ENCODE measurements at regions of chr12 and their contacts with region 1.

Region 1: GRCh38 chr12:12736759-12737676 is 19.9 kb downstream of the CDKN1B start:
- DNase-seq: peak; percentile 72
- ATAC-seq: peak; percentile 87
- H3K4me3 ChIP-seq: peak overlapping the region in 3 of 5 experiments; percentile 7 to 49 (median 44)
- H3K4me3 Mint-ChIP-seq: peak overlapping the region; percentile 66
- H3K27ac ChIP-seq: peak overlapping the region; percentile 32 to 64
- H3K27ac Mint-ChIP-seq: peak overlapping the region; percentile 85
- H3K4me1 ChIP-seq: peaks cover 6 to 14% of the 10 kb centered on the region in 2 donors
- H3K4me1 Mint-ChIP-seq: peaks cover 14% of the 10 kb centered on the region
- H3K27me3 ChIP-seq: no peaks in the 10 kb centered on the region
- H3K27me3 Mint-ChIP-seq: no peaks in the 10 kb centered on the region
- CTCF ChIP-seq: peak; percentile 81

Region 2: DNA sequence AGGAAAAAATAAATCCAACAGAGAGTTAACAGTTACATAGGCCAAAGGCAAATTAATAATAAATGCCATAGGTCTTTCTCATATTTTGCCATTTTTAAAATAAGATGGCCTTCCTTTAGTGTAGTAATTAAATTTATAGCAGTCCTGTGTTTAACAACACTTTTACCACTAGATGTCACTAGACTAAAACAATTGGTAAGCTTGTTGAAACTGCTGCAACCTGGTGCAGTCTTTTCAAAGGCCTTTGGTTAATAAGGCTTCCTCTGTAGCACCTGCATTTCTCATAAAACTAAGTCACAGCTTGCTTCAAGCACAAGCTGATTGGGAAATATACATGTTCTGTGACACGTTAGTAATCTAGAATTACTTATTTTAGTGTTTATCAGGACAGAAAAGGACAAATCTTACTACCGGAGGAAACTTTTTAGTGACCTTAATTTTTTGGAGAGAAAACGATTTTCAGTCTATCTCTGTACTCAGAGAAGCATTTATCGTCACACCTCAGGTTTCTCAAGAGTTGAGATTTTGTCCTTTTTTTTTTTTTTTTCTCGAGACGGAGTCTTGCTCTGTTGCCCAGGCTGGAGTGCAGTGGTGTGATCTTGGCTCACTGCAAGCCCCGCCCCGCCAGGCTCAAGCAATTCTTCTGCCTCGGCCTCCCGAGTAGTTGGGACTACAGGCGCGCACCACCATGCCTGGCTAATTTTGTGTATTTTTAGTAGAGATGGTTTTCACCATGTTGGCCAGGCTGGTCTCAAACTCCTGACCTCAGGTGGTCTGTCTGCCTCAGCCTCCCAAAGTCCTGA is 360.2 kb before region 1 on chr12:
- CTCF ChIA-PET with region 1: interaction called, 168 read pairs
- POLR2A ChIA-PET with region 1: interaction called, 7 read pairs
- intact Hi-C with region 1: loop called (anchors 1 kb)
- DNase-seq: peak; percentile 78
- ATAC-seq: peak; percentile 64
- H3K4me3 ChIP-seq: no peak overlapping the region
- H3K4me3 Mint-ChIP-seq: no peak overlapping the region
- H3K27ac ChIP-seq: no peak overlapping the region
- H3K27ac Mint-ChIP-seq: no peak overlapping the region
- H3K4me1 ChIP-seq: peaks cover 10 to 12% of the 10 kb centered on the region in 2 donors
- H3K4me1 Mint-ChIP-seq: peaks cover 21% of the 10 kb centered on the region
- H3K27me3 ChIP-seq: no peaks in the 10 kb centered on the region
- H3K27me3 Mint-ChIP-seq: no peaks in the 10 kb centered on the region
- CTCF ChIP-seq: peak; percentile 79

Region 3: DNA sequence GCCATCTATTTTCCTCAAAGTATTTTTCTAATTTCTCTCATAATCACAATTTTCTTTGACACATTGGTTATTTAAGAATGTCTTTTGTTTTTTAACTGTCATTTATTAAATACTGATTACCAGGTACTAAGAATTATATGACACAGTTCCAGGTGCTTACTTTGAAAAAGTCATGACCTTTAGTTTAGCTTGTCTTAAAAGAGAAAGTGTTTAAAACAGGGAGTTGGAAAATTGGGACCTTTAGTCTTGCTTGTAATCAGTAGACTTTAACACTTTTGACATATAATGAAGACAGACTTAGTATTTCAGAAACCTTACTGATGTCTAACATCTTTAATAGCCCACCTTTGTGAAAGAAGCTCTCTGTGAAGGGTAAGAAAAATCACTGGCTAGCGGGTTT is 106.2 kb before region 1 on chr12:
- CTCF ChIA-PET with region 1: interaction called, 15 read pairs
- POLR2A ChIA-PET with region 1: no interaction called
- intact Hi-C with region 1: no loop called
- DNase-seq: no peak
- ATAC-seq: no peak
- H3K4me3 ChIP-seq: no peak overlapping the region
- H3K4me3 Mint-ChIP-seq: no peak overlapping the region
- H3K27ac ChIP-seq: no peak overlapping the region
- H3K27ac Mint-ChIP-seq: no peak overlapping the region
- H3K4me1 ChIP-seq: no peaks in the 10 kb centered on the region
- H3K4me1 Mint-ChIP-seq: peaks cover 8% of the 10 kb centered on the region
- H3K27me3 ChIP-seq: no peaks in the 10 kb centered on the region
- H3K27me3 Mint-ChIP-seq: no peaks in the 10 kb centered on the region
- CTCF ChIP-seq: no peak

Region 4: DNA sequence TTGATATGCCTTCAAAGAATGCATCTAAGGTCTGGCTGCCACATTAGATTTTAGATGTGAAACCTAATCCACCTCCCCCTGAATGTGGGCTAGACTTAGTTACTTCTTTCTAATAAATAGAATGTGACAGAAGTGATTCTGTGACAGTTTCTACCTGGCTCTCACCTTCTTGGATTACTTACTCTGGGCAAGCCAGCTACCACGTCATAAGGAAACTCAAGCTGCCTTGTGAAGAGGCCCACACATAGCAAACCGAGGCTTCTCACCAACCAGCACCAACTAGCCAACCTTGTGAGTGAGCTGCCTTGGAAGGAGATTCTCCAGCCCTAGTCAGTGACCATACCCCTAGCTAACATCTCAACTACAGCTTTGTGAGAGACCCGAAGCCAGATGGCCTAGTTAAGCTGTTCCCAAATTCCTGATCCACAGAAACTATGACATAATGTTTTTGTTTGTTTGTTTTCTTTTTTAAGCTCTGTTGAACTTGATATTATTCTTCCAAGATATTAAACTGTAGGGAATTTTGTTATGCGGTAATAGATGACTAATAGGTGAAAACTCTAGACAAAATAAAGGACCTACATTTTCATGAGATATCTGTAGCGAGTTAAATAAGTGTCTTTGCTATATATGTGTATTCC is 47.3 kb before region 1 on chr12:
- CTCF ChIA-PET with region 1: interaction called, 34 read pairs
- POLR2A ChIA-PET with region 1: interaction called, 6 read pairs
- intact Hi-C with region 1: no loop called
- DNase-seq: no peak
- ATAC-seq: no peak
- H3K4me3 ChIP-seq: no peak overlapping the region
- H3K4me3 Mint-ChIP-seq: no peak overlapping the region
- H3K27ac ChIP-seq: no peak overlapping the region
- H3K27ac Mint-ChIP-seq: no peak overlapping the region
- H3K4me1 ChIP-seq: peaks cover 5 to 13% of the 10 kb centered on the region in 2 donors
- H3K4me1 Mint-ChIP-seq: peaks cover 13% of the 10 kb centered on the region
- H3K27me3 ChIP-seq: no peaks in the 10 kb centered on the region
- H3K27me3 Mint-ChIP-seq: no peaks in the 10 kb centered on the region
- CTCF ChIP-seq: no peak

Region 5: DNA sequence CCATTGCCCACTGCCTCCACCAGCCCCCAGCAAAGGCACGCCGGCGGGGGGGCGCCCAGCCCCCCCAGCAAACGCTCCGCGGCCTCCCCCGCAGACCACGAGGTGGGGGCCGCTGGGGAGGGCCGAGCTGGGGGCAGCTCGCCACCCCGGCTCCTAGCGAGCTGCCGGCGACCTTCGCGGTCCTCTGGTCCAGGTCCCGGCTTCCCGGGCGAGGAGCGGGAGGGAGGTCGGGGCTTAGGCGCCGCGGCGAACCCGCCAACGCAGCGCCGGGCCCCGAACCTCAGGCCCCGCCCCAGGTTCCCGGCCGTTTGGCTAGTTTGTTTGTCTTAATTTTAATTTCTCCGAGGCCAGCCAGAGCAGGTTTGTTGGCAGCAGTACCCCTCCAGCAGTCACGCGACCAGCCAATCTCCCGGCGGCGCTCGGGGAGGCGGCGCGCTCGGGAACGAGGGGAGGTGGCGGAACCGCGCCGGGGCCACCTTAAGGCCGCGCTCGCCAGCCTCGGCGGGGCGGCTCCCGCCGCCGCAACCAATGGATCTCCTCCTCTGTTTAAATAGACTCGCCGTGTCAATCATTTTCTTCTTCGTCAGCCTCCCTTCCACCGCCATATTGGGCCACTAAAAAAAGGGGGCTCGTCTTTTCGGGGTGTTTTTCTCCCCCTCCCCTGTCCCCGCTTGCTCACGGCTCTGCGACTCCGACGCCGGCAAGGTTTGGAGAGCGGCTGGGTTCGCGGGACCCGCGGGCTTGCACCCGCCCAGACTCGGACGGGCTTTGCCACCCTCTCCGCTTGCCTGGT is 20.0 kb before region 1 on chr12 and contains the start of gene CDKN1B:
- CTCF ChIA-PET with region 1: interaction called, 59 read pairs
- POLR2A ChIA-PET with region 1: interaction called, 57 read pairs
- intact Hi-C with region 1: loop called (anchors 1 kb)
- DNase-seq: peak; percentile 92
- ATAC-seq: peak; percentile 64
- H3K4me3 ChIP-seq: peak within 1 kb of the TSS; percentile 82 to 100 (median 96)
- H3K4me3 Mint-ChIP-seq: peak within 1 kb of the TSS; percentile 97
- H3K27ac ChIP-seq: peak within 1 kb of the TSS; percentile 94 to 96
- H3K27ac Mint-ChIP-seq: peak within 1 kb of the TSS; percentile 98
- H3K4me1 ChIP-seq: peaks cover 49 to 53% of the 10 kb centered on the region in 2 donors
- H3K4me1 Mint-ChIP-seq: peaks cover 66% of the 10 kb centered on the region
- H3K27me3 ChIP-seq: no peaks in the 10 kb centered on the region
- H3K27me3 Mint-ChIP-seq: no peaks in the 10 kb centered on the region
- CTCF ChIP-seq: no peak
- total RNA-seq, gene CDKN1B: 133 and 149 TPM in 2 replicates

Region 6: GRCh38 chr12:12786716-12787601 is 49.9 kb after region 1 on chr12:
- CTCF ChIA-PET with region 1: interaction called, 21 read pairs
- POLR2A ChIA-PET with region 1: no interaction called
- intact Hi-C with region 1: no loop called
- DNase-seq: peak; percentile 85
- ATAC-seq: peak; percentile 92
- H3K4me3 ChIP-seq: peak overlapping the region; percentile 54 to 88 (median 77)
- H3K4me3 Mint-ChIP-seq: peak overlapping the region; percentile 90
- H3K27ac ChIP-seq: peak overlapping the region; percentile 77 to 82
- H3K27ac Mint-ChIP-seq: peak overlapping the region; percentile 92
- H3K4me1 ChIP-seq: peaks cover 10 to 24% of the 10 kb centered on the region in 2 donors
- H3K4me1 Mint-ChIP-seq: peaks cover 20% of the 10 kb centered on the region
- H3K27me3 ChIP-seq: no peaks in the 10 kb centered on the region
- H3K27me3 Mint-ChIP-seq: no peaks in the 10 kb centered on the region
- CTCF ChIP-seq: peak; percentile 14

Measured in B cell (primary cell).